Common myeloid progenitor, CD34-positive (primary cell): ENCODE measurements at regions of chr1 and their contacts with region 1.

Region 1: GRCh38 chr1:39189592-39190041 is 14.9 kb upstream of the MACF1 start:
- DNase-seq: peak in 2 of 3 donors; percentile 28 to 41
- H3K4me3 ChIP-seq: no peak overlapping the region
- H3K27ac ChIP-seq: peak overlapping the region in 1 of 2 experiments; percentile 59
- H3K4me1 ChIP-seq: peaks cover 12 to 60% (median 43%) of the 10 kb centered on the region in 4 experiments
- H3K27me3 ChIP-seq: no peaks in the 10 kb centered on the region

Region 2: DNA sequence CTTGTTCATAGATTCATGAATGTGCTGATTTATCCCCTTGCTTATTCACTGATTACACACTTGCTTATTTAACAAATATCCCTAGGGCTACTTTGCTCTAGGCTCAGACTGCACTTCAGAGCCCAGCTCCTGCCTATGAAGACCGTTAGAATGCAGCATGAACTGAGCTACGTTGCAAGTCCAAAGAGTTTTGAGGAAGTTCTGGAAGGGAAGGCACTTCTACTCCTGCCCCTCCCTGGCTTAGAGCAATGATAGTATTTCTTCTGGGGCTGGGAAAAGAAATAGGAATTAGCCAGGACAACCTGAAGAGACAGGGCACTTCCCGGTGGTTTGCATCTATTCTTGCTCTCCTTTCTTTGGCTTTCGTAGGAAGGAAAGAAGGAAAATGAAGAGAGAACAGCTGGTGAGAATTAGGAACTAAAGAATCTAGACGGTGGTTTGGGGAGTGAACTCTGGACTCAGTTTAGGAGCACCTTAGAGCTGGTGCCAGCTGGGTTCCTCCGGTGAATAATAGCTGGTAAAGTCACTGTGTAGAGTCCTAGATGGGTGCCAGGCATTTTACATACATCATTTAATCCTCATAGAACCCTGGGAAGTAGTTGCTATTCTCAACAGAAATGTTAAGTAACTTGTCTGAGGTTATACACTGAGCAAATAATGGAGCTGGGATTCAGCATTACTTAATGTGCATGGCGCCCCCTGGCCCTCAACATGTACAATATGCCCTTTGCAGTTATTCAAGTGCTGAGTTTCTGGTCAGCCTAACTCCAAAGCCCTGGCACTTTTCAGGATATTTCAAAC is 97.6 kb before region 1 on chr1:
- CTCF ChIA-PET with region 1: interaction called, 123 read pairs
- POLR2A ChIA-PET with region 1: no interaction called
- DNase-seq: peak; percentile 68 to 80 (median 76)
- H3K4me3 ChIP-seq: no peak overlapping the region
- H3K27ac ChIP-seq: no peak overlapping the region
- H3K4me1 ChIP-seq: peaks cover 0 to 10% (median 5%) of the 10 kb centered on the region in 4 experiments
- H3K27me3 ChIP-seq: no peaks in the 10 kb centered on the region

Region 3: DNA sequence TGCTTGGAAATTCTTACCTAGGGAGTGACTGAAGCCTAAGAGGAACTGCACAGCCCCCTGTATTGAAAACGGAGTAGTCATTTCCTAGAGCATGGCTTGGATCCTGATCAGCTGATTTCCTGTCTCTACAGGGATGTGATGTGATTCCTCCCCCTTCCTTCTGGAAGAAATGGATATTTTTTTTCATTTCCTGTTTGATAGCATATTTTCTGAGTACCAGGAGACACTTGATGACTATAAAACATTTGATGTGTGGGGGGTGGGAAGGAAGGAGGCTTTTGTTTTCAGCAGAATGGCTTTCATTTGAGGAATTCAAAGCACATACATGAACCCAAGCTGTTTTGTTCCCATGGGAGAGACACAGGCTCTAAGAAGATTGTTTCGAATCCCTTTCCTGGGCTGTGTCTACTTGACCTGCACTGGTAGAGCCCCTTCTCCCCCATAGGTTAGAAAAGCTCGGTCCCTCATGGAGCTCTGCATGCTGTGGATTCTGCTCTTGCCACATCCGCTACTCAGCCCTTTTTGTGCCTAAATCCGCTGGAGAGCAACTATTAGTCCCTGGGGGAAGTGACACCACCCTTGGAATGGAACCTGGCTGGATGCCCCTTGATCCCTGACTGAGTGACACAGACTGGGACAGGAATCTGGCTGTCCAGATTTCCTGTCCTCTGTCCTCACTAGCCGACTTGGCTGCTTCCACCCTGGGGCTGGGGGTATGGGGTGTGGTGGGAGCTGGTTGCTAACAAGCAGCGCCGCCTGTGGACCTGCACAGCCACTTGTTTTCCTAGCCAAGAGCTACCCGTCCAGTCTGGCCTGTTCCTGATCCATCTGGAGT is 56.9 kb before region 1 on chr1:
- CTCF ChIA-PET with region 1: interaction called, 115 read pairs
- POLR2A ChIA-PET with region 1: interaction called, 3 read pairs
- DNase-seq: no peak
- H3K4me3 ChIP-seq: no peak overlapping the region
- H3K27ac ChIP-seq: no peak overlapping the region
- H3K4me1 ChIP-seq: peaks cover 0 to 18% (median 9%) of the 10 kb centered on the region in 4 experiments
- H3K27me3 ChIP-seq: no peaks in the 10 kb centered on the region